GM12878 (cell line): ENCODE measurements at regions of chr16 and their contacts with region 1.

Region 1: GRCh38 chr16:30458561-30459394 is 13.1 kb upstream of the SEPHS2 start:
- DNase-seq: peak; percentile 97
- ATAC-seq: peak; percentile 86
- H3K4me3 ChIP-seq: peak overlapping the region; percentile 9; the same call in 1 of the 2 replicates
- H3K27ac ChIP-seq: peak overlapping the region; percentile 89
- H3K4me1 ChIP-seq: peaks cover 47% of the 10 kb centered on the region
- H3K27me3 ChIP-seq: no peaks in the 10 kb centered on the region
- CTCF ChIP-seq: no peak
- EP300 ChIP-seq: peak; percentile 99 to 100
- POLR2A ChIP-seq: peak; percentile 96
- RAD21 ChIP-seq: 0 out of 2 replicates have a peak, but pooled peaks have one; percentile 22

Region 2: GRCh38 chr16:30383521-30383920 is 75.3 kb before region 1 on chr16:
- CTCF ChIA-PET with region 1: no interaction called
- POLR2A ChIA-PET with region 1: no interaction called
- RAD21 ChIA-PET with region 1: no interaction called
- SMC1A ChIA-PET with region 1: no interaction called
- in situ Hi-C with region 1: no loop called
- intact Hi-C with region 1: no loop called
- DNase-seq: no peak
- ATAC-seq: no peak
- H3K4me3 ChIP-seq: no peak overlapping the region
- H3K27ac ChIP-seq: no peak overlapping the region
- H3K4me1 ChIP-seq: peaks cover 21% of the 10 kb centered on the region
- H3K27me3 ChIP-seq: no peaks in the 10 kb centered on the region
- CTCF ChIP-seq: no peak
- EP300 ChIP-seq: no peak
- POLR2A ChIP-seq: no peak
- RAD21 ChIP-seq: no peak

Region 3: GRCh38 chr16:30395155-30395991 is 63.4 kb before region 1 on chr16 and contains the start of gene ZNF48:
- CTCF ChIA-PET with region 1: no interaction called
- POLR2A ChIA-PET with region 1: no interaction called
- RAD21 ChIA-PET with region 1: no interaction called
- SMC1A ChIA-PET with region 1: no interaction called
- in situ Hi-C with region 1: no loop called
- intact Hi-C with region 1: no loop called
- DNase-seq: no peak
- ATAC-seq: peak; percentile 90
- H3K4me3 ChIP-seq: peak within 1 kb of the TSS; percentile 92
- H3K27ac ChIP-seq: peak within 1 kb of the TSS; percentile 42
- H3K4me1 ChIP-seq: peaks cover 13% of the 10 kb centered on the region
- H3K27me3 ChIP-seq: no peaks in the 10 kb centered on the region
- CTCF ChIP-seq: peak in 2 of 3 experiments; percentile 42 to 46; a peak in 3 of 6 replicates
- EP300 ChIP-seq: no peak
- POLR2A ChIP-seq: peak; percentile 74
- RAD21 ChIP-seq: no peak
- polyA plus RNA-seq, gene ZNF48: 0.14 to 1.0 TPM

Region 4: GRCh38 chr16:30445408-30446202 is 13.2 kb before region 1 on chr16 and contains the start of gene SEPHS2:
- CTCF ChIA-PET with region 1: interaction called, 44 read pairs
- POLR2A ChIA-PET with region 1: interaction called, 31 read pairs
- RAD21 ChIA-PET with region 1: interaction called, 9 read pairs
- SMC1A ChIA-PET with region 1: interaction called, 37 read pairs
- in situ Hi-C with region 1: no loop called
- intact Hi-C with region 1: no loop called
- DNase-seq: peak; percentile 84
- ATAC-seq: peak; percentile 94
- H3K4me3 ChIP-seq: peak within 1 kb of the TSS; percentile 79
- H3K27ac ChIP-seq: peak within 1 kb of the TSS; percentile 85
- H3K4me1 ChIP-seq: peaks cover 10% of the 10 kb centered on the region
- H3K27me3 ChIP-seq: no peaks in the 10 kb centered on the region
- CTCF ChIP-seq: peak; percentile 38 to 52 (median 49); a peak in 5 of 6 replicates
- EP300 ChIP-seq: no peak
- POLR2A ChIP-seq: peak; percentile 90
- RAD21 ChIP-seq: no peak
- polyA plus RNA-seq, gene SEPHS2: 21.6 to 37.4 TPM

Region 5: GRCh38 chr16:30472328-30472942 is 13.7 kb after region 1 on chr16 and contains the start of gene ITGAL:
- CTCF ChIA-PET with region 1: interaction called, 125 read pairs
- POLR2A ChIA-PET with region 1: interaction called, 367 read pairs
- RAD21 ChIA-PET with region 1: interaction called, 307 read pairs
- SMC1A ChIA-PET with region 1: interaction called, 431 read pairs
- in situ Hi-C with region 1: no loop called
- intact Hi-C with region 1: loop called (anchors 1 kb)
- DNase-seq: peak; percentile 98
- ATAC-seq: peak; percentile 67
- H3K4me3 ChIP-seq: peak within 1 kb of the TSS; percentile 96
- H3K27ac ChIP-seq: peak within 1 kb of the TSS; percentile 90
- H3K4me1 ChIP-seq: peaks cover 40% of the 10 kb centered on the region
- H3K27me3 ChIP-seq: no peaks in the 10 kb centered on the region
- CTCF ChIP-seq: no peak
- EP300 ChIP-seq: peak; percentile 86 to 95; a peak in 3 of 4 replicates
- POLR2A ChIP-seq: peak; percentile 81
- RAD21 ChIP-seq: peak; percentile 3; the same call in 1 of the 2 replicates
- polyA plus RNA-seq, gene ITGAL: 10.7 to 12.1 TPM

Region 6: GRCh38 chr16:30478766-30479478 is 20.1 kb after region 1 on chr16:
- CTCF ChIA-PET with region 1: interaction called, 125 read pairs
- POLR2A ChIA-PET with region 1: interaction called, 367 read pairs
- RAD21 ChIA-PET with region 1: interaction called, 307 read pairs
- SMC1A ChIA-PET with region 1: interaction called, 431 read pairs
- in situ Hi-C with region 1: no loop called
- intact Hi-C with region 1: no loop called
- DNase-seq: no peak
- ATAC-seq: peak; percentile 5
- H3K4me3 ChIP-seq: no peak overlapping the region
- H3K27ac ChIP-seq: no peak overlapping the region
- H3K4me1 ChIP-seq: peaks cover 11% of the 10 kb centered on the region
- H3K27me3 ChIP-seq: no peaks in the 10 kb centered on the region
- CTCF ChIP-seq: no peak
- EP300 ChIP-seq: no peak
- POLR2A ChIP-seq: peak; percentile 35; the same call in 1 of the 2 replicates
- RAD21 ChIP-seq: no peak

Region 7: DNA sequence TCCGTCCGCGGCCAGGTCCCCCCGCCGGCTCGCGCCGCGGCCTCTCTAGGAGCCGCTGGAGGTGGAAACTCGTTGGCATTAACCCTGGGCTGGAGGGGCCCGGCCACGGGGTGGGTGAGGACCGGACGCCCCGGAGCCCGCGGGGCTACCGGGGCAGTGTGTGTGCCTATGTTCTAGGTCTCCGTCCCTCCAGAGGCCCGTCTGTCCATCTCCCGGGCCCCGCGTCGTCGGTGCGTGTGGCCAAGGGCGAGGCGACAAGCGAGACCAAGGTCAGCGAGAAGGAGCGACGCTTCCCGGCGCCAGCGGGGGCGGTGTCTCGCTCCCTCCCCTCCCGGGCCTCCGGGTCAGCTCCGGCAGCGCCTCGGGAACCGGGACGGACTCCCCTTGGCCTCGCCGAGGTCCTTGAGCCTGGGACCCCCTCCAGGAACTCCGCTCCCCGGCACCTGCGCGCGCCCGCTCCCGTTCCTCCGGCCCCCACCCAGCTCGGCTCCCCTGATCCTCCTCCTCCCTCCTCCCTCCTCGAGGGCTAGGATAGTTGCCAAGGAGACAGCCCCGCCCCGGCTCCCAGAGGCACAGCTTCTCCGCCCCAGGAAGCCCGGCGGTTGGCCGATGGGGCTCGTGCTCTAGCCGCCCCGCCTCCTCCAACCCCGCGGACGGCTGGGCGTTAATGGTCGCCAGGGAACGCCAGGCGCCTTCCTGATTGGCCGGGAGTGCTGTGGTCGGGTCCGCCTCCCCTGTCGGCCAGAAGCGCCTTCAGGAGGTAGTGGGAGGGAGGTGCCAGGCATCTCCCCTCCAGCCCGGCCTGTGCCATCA is 68.3 kb after region 1 on chr16:
- CTCF ChIA-PET with region 1: interaction called, 7 read pairs
- POLR2A ChIA-PET with region 1: interaction called, 36 read pairs
- RAD21 ChIA-PET with region 1: interaction called, 7 read pairs
- SMC1A ChIA-PET with region 1: interaction called, 4 read pairs
- in situ Hi-C with region 1: no loop called
- intact Hi-C with region 1: no loop called
- DNase-seq: peak; percentile 89
- ATAC-seq: peak; percentile 95
- H3K4me3 ChIP-seq: peak overlapping the region; percentile 91
- H3K27ac ChIP-seq: peak overlapping the region; percentile 93
- H3K4me1 ChIP-seq: peaks cover 15% of the 10 kb centered on the region
- H3K27me3 ChIP-seq: no peaks in the 10 kb centered on the region
- CTCF ChIP-seq: peak; percentile 19 to 42 (median 25); a peak in 4 of 6 replicates
- EP300 ChIP-seq: no peak
- POLR2A ChIP-seq: peak; percentile 42; the same call in 1 of the 2 replicates
- RAD21 ChIP-seq: no peak

Region 8: DNA sequence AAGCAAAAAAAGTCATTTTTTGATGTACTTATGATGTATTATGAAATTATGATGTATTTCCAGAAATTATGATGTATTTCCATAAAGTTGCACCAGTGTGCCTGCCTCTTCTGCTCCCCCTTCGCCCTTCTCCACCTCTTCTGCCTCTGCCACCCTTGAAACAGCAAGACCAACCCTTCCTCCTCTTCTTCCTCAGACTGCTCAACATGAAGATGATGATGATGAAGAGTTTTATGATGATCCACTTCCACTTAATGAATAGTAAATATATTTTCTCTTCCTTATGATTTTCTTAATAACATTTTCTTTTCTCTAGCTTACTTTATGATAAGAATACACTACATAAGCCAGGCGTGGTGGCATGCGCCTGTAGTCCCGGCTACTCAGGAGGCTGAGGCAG is 134.1 kb after region 1 on chr16:
- CTCF ChIA-PET with region 1: interaction called, 9 read pairs
- POLR2A ChIA-PET with region 1: interaction called, 12 read pairs
- RAD21 ChIA-PET with region 1: no interaction called
- SMC1A ChIA-PET with region 1: no interaction called
- in situ Hi-C with region 1: no loop called
- intact Hi-C with region 1: no loop called
- DNase-seq: no peak
- ATAC-seq: no peak
- H3K4me3 ChIP-seq: no peak overlapping the region
- H3K27ac ChIP-seq: no peak overlapping the region
- H3K4me1 ChIP-seq: no peaks in the 10 kb centered on the region
- H3K27me3 ChIP-seq: no peaks in the 10 kb centered on the region
- CTCF ChIP-seq: no peak
- EP300 ChIP-seq: no peak
- POLR2A ChIP-seq: no peak
- RAD21 ChIP-seq: no peak

Region 9: GRCh38 chr16:30669896-30670797 is 211.4 kb after region 1 on chr16:
- CTCF ChIA-PET with region 1: no interaction called
- POLR2A ChIA-PET with region 1: no interaction called
- RAD21 ChIA-PET with region 1: no interaction called
- SMC1A ChIA-PET with region 1: no interaction called
- in situ Hi-C with region 1: no loop called
- intact Hi-C with region 1: no loop called
- DNase-seq: no peak
- ATAC-seq: no peak; the same call in 1 of the 3 replicates
- H3K4me3 ChIP-seq: no peak overlapping the region
- H3K27ac ChIP-seq: no peak overlapping the region
- H3K4me1 ChIP-seq: no peaks in the 10 kb centered on the region
- H3K27me3 ChIP-seq: no peaks in the 10 kb centered on the region
- CTCF ChIP-seq: no peak
- EP300 ChIP-seq: no peak
- POLR2A ChIP-seq: peak; percentile 34
- RAD21 ChIP-seq: no peak